Psoas muscle (tissue), 8 donors: ENCODE measurements at regions of chr5 and their contacts with region 1.

Region 1: GRCh38 chr5:142872795-142873194 is 102.6 kb downstream of the ARHGAP26 start:
- DNase-seq: no peak
- ATAC-seq: peak in 3 of 4 donors; percentile 24 to 29 (median 25)
- H3K4me3 ChIP-seq: no peak overlapping the region
- H3K27ac ChIP-seq: no peak overlapping the region
- H3K4me1 ChIP-seq: peaks cover 12% of the 10 kb centered on the region
- H3K27me3 ChIP-seq: no peaks in the 10 kb centered on the region
- CTCF ChIP-seq: no peak

Region 2: GRCh38 chr5:142748568-142749249 is 124.1 kb before region 1 on chr5:
- intact Hi-C with region 1: loop called (anchors 2 to 5 kb)
- DNase-seq: peak in 1 of 2 donors; percentile 70
- ATAC-seq: peak; percentile 69 to 89 (median 80)
- H3K4me3 ChIP-seq: no peak overlapping the region
- H3K27ac ChIP-seq: no peak overlapping the region
- H3K4me1 ChIP-seq: peaks cover 14% of the 10 kb centered on the region
- H3K27me3 ChIP-seq: no peaks in the 10 kb centered on the region
- CTCF ChIP-seq: peak; percentile 76

Region 3: GRCh38 chr5:142800776-142801494 is 71.9 kb before region 1 on chr5:
- intact Hi-C with region 1: no loop called
- DNase-seq: no peak
- ATAC-seq: no peak
- H3K4me3 ChIP-seq: no peak overlapping the region
- H3K27ac ChIP-seq: no peak overlapping the region
- H3K4me1 ChIP-seq: peaks cover 6% of the 10 kb centered on the region
- H3K27me3 ChIP-seq: no peaks in the 10 kb centered on the region
- CTCF ChIP-seq: no peak

Region 4: GRCh38 chr5:142959683-142960657 is 87.2 kb after region 1 on chr5:
- intact Hi-C with region 1: no loop called
- DNase-seq: no peak
- ATAC-seq: peak; percentile 61 to 73 (median 66)
- H3K4me3 ChIP-seq: no peak overlapping the region
- H3K27ac ChIP-seq: no peak overlapping the region
- H3K4me1 ChIP-seq: peaks cover 41% of the 10 kb centered on the region
- H3K27me3 ChIP-seq: no peaks in the 10 kb centered on the region
- CTCF ChIP-seq: no peak